ENCODE measurements at regions of chr10 and their contacts with region 1.

Region 1: GRCh38 chr10:44932517-44933450 is 21.6 kb downstream of the TMEM72 start:
- DNase-seq: peak; percentile 56 to 96
- H3K4me3 ChIP-seq: no peak overlapping the region
- H3K27ac ChIP-seq: peak overlapping the region in 1 of 2 donors; percentile 7
- H3K4me1 ChIP-seq: peaks cover 4 to 17% of the 10 kb centered on the region in 2 donors
- H3K27me3 ChIP-seq: no peaks in the 10 kb centered on the region
- CTCF ChIP-seq: peak; percentile 91 to 98 (median 97)

Region 2: DNA sequence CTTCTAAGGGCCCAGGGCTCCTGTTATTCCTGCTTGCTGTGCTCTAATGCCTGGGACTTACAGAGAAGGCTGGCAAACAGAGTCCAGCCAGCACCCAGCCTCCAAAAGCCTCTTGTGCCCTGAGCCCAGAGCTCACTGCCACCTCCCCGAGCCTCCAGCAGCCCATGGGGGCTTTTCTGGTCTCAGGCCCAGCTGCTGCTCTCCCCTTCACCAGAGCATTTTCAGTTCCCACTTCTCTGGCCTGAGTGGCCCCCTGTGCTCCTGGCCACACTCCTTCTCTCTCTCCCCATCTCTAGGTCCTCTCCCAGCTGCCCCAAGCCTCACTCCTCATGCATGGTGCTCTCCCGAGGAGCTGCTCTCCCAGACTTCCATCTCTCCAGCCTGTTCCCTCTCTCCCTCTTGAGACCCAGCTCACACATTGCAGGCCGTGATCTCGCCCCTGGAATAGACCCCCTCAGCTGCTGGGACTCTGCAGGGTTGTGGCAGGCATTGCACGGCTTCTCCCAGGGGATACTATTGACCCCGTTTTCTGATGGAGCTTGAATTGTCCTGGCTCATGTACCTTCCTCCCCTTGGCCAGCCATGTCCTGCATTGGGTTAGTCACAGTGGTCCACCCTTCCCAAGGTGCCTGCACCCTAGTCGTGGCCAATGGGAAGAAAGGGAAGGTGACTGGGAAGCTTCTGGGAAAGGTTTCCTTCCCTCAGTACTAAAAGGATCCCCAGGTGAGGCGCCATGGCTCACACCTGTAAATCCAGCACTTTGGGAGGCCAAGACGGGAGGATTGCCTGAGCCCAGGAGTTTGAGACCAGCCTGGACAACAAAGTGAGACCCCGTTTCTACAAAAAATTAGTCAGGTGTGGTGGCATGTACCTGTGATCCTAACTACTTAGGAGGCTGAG is 17.8 kb after region 1 on chr10:
- intact Hi-C with region 1: loop called (anchors 2 kb)
- DNase-seq: peak in 1 of 2 donors; percentile 48
- H3K4me3 ChIP-seq: no peak overlapping the region
- H3K27ac ChIP-seq: no peak overlapping the region
- H3K4me1 ChIP-seq: no peaks in the 10 kb centered on the region
- H3K27me3 ChIP-seq: no peaks in the 10 kb centered on the region
- CTCF ChIP-seq: no peak

Region 3: DNA sequence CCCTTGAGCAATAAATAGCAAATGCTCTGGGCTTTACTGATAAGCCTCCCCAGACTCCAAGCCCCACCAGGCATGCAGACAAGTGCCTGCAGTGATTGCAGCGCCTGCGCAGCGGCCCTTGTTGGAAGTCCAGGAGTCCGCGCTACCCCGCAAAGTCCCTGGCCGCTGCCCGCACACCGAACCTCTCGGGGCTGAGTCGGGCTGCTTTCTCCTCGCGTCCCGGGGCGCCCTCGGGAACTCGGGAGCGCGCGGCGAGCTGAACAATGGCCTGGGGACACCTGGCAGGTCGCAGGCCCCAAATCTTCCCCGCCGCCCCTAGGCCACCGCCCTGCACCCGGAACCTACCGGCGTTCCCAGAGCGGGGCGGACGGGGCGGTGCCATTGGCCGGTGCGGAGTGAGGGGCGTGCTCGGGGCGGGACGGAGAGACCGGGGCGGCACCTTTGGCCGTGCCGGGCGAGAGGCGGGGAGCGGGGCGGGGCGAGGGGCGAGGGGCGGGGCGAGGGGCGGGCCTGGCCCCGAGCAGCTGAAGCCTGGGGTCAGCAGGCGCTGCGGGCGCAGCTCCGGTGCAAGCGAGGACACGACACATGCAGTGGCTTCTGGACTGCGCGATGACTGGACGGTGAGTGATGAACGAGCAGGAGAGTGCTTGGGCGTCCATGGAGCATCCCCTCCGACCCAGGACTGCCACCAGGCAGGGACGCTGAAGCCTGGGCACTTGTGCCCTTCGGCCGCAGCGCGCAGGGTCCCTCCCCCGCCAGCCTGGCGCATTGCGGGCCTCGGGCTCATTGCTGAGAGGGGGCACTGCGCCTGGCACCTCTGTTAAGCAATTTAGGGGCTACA is 26.7 kb after region 1 on chr10 and contains the start of gene RASSF4:
- intact Hi-C with region 1: loop called (anchors 2 kb)
- DNase-seq: peak in 1 of 2 donors; percentile 95
- H3K4me3 ChIP-seq: peak within 1 kb of the TSS; percentile 78 to 93
- H3K27ac ChIP-seq: peak within 1 kb of the TSS; percentile 86 to 90
- H3K4me1 ChIP-seq: peaks cover 13 to 40% of the 10 kb centered on the region in 2 donors
- H3K27me3 ChIP-seq: no peaks in the 10 kb centered on the region
- CTCF ChIP-seq: peak in 1 of 3 experiments; percentile 15
- total RNA-seq, gene RASSF4: 40.0 TPM

Region 4: DNA sequence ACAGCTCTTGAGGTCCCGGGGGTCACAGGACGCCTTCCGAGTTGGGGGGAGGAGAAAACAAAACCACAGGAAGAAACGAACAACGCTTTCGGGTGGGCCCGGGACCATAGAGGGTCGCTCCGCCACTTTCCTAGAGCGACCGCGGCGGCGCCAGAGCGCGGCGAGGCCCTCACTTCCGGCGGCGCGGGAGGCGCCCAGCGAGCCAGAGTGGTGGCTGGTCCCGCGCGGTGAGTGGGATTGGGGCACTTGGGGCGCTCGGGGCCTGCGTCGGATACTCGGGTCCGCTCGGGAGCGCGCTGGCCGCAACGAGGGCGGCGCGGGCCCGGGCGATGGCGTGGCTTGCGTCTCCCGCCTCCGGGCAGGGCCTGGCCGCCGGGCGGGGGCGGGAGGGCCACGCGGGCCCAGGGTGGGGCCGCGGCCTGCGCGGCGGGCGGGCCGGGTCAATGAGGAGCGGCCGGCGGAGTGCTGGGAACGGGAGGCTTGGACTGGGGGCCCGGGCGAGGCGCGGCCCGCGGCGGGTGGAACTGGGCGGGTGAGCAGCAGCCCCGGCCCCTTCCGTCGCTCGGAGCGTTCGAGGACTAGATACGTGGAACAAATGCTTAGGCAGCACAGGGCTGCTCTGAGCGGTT is 68.1 kb after region 1 on chr10 and contains the start of gene ZNF22:
- intact Hi-C with region 1: loop called (anchors 2 kb)
- DNase-seq: no peak
- H3K4me3 ChIP-seq: peak within 1 kb of the TSS; percentile 74
- H3K27ac ChIP-seq: peak within 1 kb of the TSS; percentile 90 to 93
- H3K4me1 ChIP-seq: peaks cover 3 to 44% of the 10 kb centered on the region in 2 donors
- H3K27me3 ChIP-seq: no peaks in the 10 kb centered on the region
- CTCF ChIP-seq: peak in 1 of 3 experiments; percentile 30
- total RNA-seq, gene ZNF22: 1.6 TPM

Region 5: GRCh38 chr10:45180946-45181875 is 248.4 kb after region 1 on chr10:
- intact Hi-C with region 1: loop called (anchors 10 kb)
- DNase-seq: peak in 1 of 2 donors; percentile 72
- H3K4me3 ChIP-seq: peak overlapping the region in 1 of 2 donors; percentile 9
- H3K27ac ChIP-seq: peak overlapping the region; percentile 70
- H3K4me1 ChIP-seq: peaks cover 0 to 13% of the 10 kb centered on the region in 2 donors
- H3K27me3 ChIP-seq: no peaks in the 10 kb centered on the region
- CTCF ChIP-seq: no peak

Region 6: DNA sequence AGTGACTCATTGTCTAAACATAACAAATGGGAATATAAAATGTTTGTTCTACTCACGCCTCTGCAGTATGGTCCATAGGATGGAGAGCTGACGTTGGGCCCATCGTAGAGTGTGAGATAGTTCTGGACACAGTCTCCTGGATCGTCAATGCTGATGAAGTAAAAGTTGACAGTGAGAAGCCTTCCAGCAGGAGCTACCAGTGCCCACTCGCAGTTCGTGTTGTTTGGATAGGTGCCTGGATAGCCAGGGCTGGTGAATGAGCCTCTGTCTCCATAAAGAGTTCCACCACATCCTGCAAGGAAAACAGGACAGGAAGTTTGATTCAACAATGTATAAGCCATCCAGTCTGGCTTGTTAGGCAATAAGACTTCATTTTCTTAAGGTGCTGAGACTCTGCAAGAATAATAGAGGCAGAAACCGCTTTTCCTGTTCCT is 303.0 kb after region 1 on chr10:
- intact Hi-C with region 1: loop called (anchors 10 kb)
- DNase-seq: no peak
- H3K4me3 ChIP-seq: no peak overlapping the region
- H3K27ac ChIP-seq: no peak overlapping the region
- H3K4me1 ChIP-seq: peaks cover 0 to 5% of the 10 kb centered on the region in 2 donors
- H3K27me3 ChIP-seq: no peaks in the 10 kb centered on the region
- CTCF ChIP-seq: no peak

Measured in ascending aorta (tissue), 2 donors.